B cell (primary cell): ENCODE measurements at regions of chr12 and their contacts with region 1.

Region 1: DNA sequence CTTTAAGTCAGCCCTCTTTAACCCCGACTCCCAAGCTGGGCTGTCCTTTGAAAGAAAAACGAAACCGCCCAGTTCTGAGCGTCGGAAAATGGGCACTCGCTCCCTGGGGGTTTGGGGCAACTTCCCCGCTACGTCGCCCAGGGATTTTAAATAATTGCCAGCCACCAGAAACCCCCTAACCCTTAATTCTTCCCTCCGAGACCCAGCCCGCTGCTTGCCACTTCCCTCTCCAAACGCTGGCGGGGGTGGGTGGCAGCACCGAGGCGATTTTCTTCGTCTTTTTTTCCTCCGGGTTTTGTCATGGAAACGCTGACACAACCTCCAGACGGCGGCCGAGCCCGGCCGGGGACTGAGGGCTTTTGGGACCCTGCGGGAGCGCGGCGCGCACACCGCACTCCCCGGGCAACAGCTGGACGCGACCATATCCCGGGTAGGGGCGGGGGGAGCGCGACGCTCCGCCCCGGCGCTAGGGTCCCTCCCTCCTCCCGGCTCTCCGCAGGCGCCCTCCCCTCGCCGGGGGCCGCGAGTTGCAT is at the start of gene CHST11:
- DNase-seq: peak; percentile 84
- ATAC-seq: peak; percentile 75
- H3K4me3 ChIP-seq: peak within 1 kb of the TSS; percentile 76 to 99 (median 97)
- H3K4me3 Mint-ChIP-seq: peak within 1 kb of the TSS; percentile 98
- H3K27ac ChIP-seq: peak within 1 kb of the TSS; percentile 71 to 92
- H3K27ac Mint-ChIP-seq: peak within 1 kb of the TSS; percentile 94
- H3K4me1 ChIP-seq: peaks cover 28 to 36% of the 10 kb centered on the region in 2 donors
- H3K4me1 Mint-ChIP-seq: peaks cover 47% of the 10 kb centered on the region
- H3K27me3 ChIP-seq: no peaks in the 10 kb centered on the region
- H3K27me3 Mint-ChIP-seq: no peaks in the 10 kb centered on the region
- CTCF ChIP-seq: peak; percentile 28
- total RNA-seq, gene CHST11: 135 and 152 TPM in 2 replicates

Region 2: GRCh38 chr12:104286538-104287482 is 169.7 kb before region 1 on chr12:
- CTCF ChIA-PET with region 1: no interaction called
- POLR2A ChIA-PET with region 1: no interaction called
- intact Hi-C with region 1: loop called (anchors 5 kb)
- DNase-seq: peak; percentile 90
- ATAC-seq: peak; percentile 83
- H3K4me3 ChIP-seq: peak overlapping the region; percentile 61 to 93 (median 82)
- H3K4me3 Mint-ChIP-seq: peak overlapping the region; percentile 100
- H3K27ac ChIP-seq: peak overlapping the region; percentile 75 to 79
- H3K27ac Mint-ChIP-seq: peak overlapping the region; percentile 99
- H3K4me1 ChIP-seq: peaks cover 25 to 29% of the 10 kb centered on the region in 2 donors
- H3K4me1 Mint-ChIP-seq: peaks cover 37% of the 10 kb centered on the region
- H3K27me3 ChIP-seq: no peaks in the 10 kb centered on the region
- H3K27me3 Mint-ChIP-seq: no peaks in the 10 kb centered on the region
- CTCF ChIP-seq: no peak

Region 3: DNA sequence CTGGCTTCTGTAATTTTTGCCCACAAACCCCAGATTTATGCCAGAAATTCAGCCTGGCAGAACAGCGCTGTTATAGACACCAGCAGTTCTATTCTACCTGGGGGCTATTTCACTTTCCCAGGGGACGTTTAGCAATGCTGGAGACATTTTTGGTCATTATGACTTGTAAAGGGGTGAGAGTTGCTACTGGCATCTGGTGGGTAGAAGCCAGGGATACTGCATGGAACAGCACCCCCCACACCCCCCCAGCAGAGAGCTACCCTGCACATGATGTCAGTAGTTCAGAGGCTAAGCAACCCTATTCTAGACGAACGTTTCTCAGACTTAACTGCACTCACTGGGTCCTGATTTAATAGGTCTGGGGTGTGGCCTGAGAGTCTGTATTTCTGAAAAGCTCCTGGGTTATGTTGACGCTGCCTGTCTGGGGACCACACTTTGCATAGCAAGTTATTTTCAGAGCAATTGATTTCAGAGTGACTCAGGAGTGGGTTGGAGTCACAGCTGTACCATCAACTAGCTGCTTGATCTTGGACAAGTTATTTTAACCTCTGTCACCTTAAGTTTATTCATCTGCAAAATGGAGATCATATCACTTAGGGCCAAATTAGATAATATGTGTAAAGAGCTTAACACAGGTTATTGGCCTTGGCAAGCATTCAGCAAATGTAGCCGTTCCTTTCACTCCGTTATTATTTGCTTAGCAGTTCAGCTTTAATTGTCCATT is 48.8 kb after region 1 on chr12:
- CTCF ChIA-PET with region 1: interaction called, 3 read pairs
- POLR2A ChIA-PET with region 1: interaction called, 3 read pairs
- intact Hi-C with region 1: loop called (anchors 5 kb)
- DNase-seq: peak; percentile 53
- ATAC-seq: peak; percentile 88
- H3K4me3 ChIP-seq: no peak overlapping the region
- H3K4me3 Mint-ChIP-seq: peak overlapping the region; percentile 70
- H3K27ac ChIP-seq: no peak overlapping the region
- H3K27ac Mint-ChIP-seq: peak overlapping the region; percentile 3
- H3K4me1 ChIP-seq: peaks cover 83 to 85% of the 10 kb centered on the region in 2 donors
- H3K4me1 Mint-ChIP-seq: peaks cover 97% of the 10 kb centered on the region
- H3K27me3 ChIP-seq: no peaks in the 10 kb centered on the region
- H3K27me3 Mint-ChIP-seq: no peaks in the 10 kb centered on the region
- CTCF ChIP-seq: no peak

Region 4: DNA sequence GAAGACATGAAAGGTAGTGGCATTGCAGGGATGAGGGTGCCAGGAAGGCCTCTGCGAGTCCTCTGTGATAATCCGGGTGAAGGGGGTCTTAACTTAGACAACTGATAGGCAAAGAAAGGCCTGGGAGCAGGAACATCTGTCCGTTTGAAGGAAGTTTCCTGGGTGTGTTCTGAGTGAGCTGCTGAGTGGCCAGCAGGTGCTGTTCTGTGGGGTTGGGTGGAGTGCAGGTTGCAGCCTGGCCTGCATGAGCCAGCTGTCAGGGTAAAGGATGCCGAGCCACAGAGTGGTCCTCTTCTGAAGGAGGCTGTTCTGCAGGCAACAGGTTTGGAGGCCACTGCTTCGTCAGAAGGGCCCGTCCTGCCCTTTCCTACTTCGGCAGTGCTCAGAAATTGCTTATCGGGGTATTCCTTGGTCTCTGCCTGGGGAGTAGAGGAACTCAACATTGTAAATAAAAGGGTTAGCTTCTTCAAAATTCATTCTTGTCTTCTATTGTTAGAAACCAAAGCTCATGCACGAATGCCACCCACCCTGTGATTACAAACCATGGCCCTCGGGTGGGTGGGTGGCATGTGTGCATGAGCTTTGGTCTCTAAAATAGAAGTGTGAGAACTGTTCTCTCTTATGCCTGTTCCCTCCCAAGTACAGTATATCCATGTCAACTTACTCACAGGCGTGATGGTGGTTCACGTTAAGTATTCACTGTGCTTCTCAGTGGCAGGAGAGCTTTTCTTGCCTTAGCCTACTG is 119.1 kb after region 1 on chr12:
- CTCF ChIA-PET with region 1: interaction called, 29 read pairs
- POLR2A ChIA-PET with region 1: interaction called, 26 read pairs
- intact Hi-C with region 1: no loop called
- DNase-seq: peak; percentile 28
- ATAC-seq: no peak
- H3K4me3 ChIP-seq: peak overlapping the region in 1 of 5 experiments; percentile 5
- H3K4me3 Mint-ChIP-seq: peak overlapping the region; percentile 51
- H3K27ac ChIP-seq: peak overlapping the region; percentile 4 to 27
- H3K27ac Mint-ChIP-seq: peak overlapping the region; percentile 76
- H3K4me1 ChIP-seq: peaks cover 54 to 60% of the 10 kb centered on the region in 2 donors
- H3K4me1 Mint-ChIP-seq: peaks cover 78% of the 10 kb centered on the region
- H3K27me3 ChIP-seq: no peaks in the 10 kb centered on the region
- H3K27me3 Mint-ChIP-seq: no peaks in the 10 kb centered on the region
- CTCF ChIP-seq: no peak

Region 5: DNA sequence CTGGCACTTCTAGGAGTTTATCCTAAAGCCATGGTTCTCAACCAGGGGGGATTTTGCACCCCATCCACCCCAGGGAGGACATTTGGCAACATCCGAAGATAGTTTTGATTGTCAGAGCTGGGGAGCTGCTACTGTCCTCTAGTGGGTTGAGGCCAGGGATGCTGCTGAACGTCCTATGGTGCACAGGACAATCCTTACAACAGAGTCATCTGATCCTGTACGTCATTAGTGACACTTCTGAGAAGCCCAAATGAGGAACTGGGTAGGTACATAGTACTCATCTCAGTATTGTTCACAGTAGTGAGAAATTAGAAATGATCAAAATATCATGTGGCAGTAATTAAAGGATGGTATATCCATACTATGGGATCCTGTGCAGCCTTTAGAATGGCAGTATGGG is 185.4 kb after region 1 on chr12:
- CTCF ChIA-PET with region 1: interaction called, 11 read pairs
- POLR2A ChIA-PET with region 1: interaction called, 6 read pairs
- intact Hi-C with region 1: loop called (anchors 2 kb)
- DNase-seq: peak; percentile 86
- ATAC-seq: peak; percentile 79
- H3K4me3 ChIP-seq: no peak overlapping the region
- H3K4me3 Mint-ChIP-seq: peak overlapping the region; percentile 42
- H3K27ac ChIP-seq: peak overlapping the region; percentile 88 to 96
- H3K27ac Mint-ChIP-seq: peak overlapping the region; percentile 91
- H3K4me1 ChIP-seq: peaks cover 43 to 57% of the 10 kb centered on the region in 2 donors
- H3K4me1 Mint-ChIP-seq: peaks cover 84% of the 10 kb centered on the region
- H3K27me3 ChIP-seq: no peaks in the 10 kb centered on the region
- H3K27me3 Mint-ChIP-seq: no peaks in the 10 kb centered on the region
- CTCF ChIP-seq: peak; percentile 57

Region 6: GRCh38 chr12:104750061-104750460 is 293.6 kb after region 1 on chr12:
- CTCF ChIA-PET with region 1: interaction called, 5 read pairs
- POLR2A ChIA-PET with region 1: no interaction called
- intact Hi-C with region 1: loop called (anchors 5 kb)
- DNase-seq: peak; percentile 62
- ATAC-seq: peak; percentile 59
- H3K4me3 ChIP-seq: no peak overlapping the region
- H3K4me3 Mint-ChIP-seq: peak overlapping the region; percentile 74
- H3K27ac ChIP-seq: no peak overlapping the region
- H3K27ac Mint-ChIP-seq: peak overlapping the region; percentile 79
- H3K4me1 ChIP-seq: peaks cover 25 to 33% of the 10 kb centered on the region in 2 donors
- H3K4me1 Mint-ChIP-seq: peaks cover 77% of the 10 kb centered on the region
- H3K27me3 ChIP-seq: no peaks in the 10 kb centered on the region
- H3K27me3 Mint-ChIP-seq: no peaks in the 10 kb centered on the region
- CTCF ChIP-seq: no peak

Region 7: GRCh38 chr12:105053116-105053572 is 596.7 kb after region 1 on chr12:
- CTCF ChIA-PET with region 1: interaction called, 5 read pairs
- POLR2A ChIA-PET with region 1: no interaction called
- intact Hi-C with region 1: loop called (anchors 10 kb)
- DNase-seq: peak; percentile 84
- ATAC-seq: peak; percentile 95
- H3K4me3 ChIP-seq: no peak overlapping the region
- H3K4me3 Mint-ChIP-seq: no peak overlapping the region
- H3K27ac ChIP-seq: no peak overlapping the region
- H3K27ac Mint-ChIP-seq: peak overlapping the region; percentile 4
- H3K4me1 ChIP-seq: peaks cover 0 to 11% of the 10 kb centered on the region in 2 donors
- H3K4me1 Mint-ChIP-seq: peaks cover 18% of the 10 kb centered on the region
- H3K27me3 ChIP-seq: no peaks in the 10 kb centered on the region
- H3K27me3 Mint-ChIP-seq: no peaks in the 10 kb centered on the region
- CTCF ChIP-seq: peak; percentile 96